Activated naive CD8-positive, alpha-beta T cell treated with anti-CD3 and anti-CD28 coated beads, Interleukin-2, amount 10 ng/mL, durations not matched to agents 7 days and 5 days (primary cell): ENCODE measurements at regions of chr5 and their contacts with region 1.

Region 1: GRCh38 chr5:80255732-80256479 is at the start of gene SERINC5:
- DNase-seq: peak; percentile 90
- ATAC-seq: peak; percentile 73
- H3K4me3 Mint-ChIP-seq: peak within 1 kb of the TSS; percentile 97
- H3K27ac Mint-ChIP-seq: peak within 1 kb of the TSS; percentile 98
- H3K4me1 Mint-ChIP-seq: peaks cover 31% of the 10 kb centered on the region
- H3K27me3 Mint-ChIP-seq: no peaks in the 10 kb centered on the region
- total RNA-seq, gene SERINC5: 70.2 to 78.3 TPM

Region 2: GRCh38 chr5:80117446-80117845 is 138.5 kb before region 1 on chr5:
- POLR2A ChIA-PET with region 1: interaction called, 11 read pairs
- DNase-seq: no peak
- ATAC-seq: peak; percentile 71
- H3K4me3 Mint-ChIP-seq: peak overlapping the region; percentile 56
- H3K27ac Mint-ChIP-seq: peak overlapping the region; percentile 62
- H3K4me1 Mint-ChIP-seq: peaks cover 15% of the 10 kb centered on the region
- H3K27me3 Mint-ChIP-seq: no peaks in the 10 kb centered on the region

Region 3: GRCh38 chr5:80134879-80135278 is 121.0 kb before region 1 on chr5:
- POLR2A ChIA-PET with region 1: interaction called, 23 read pairs
- DNase-seq: no peak
- ATAC-seq: no peak
- H3K4me3 Mint-ChIP-seq: peak overlapping the region; percentile 4
- H3K27ac Mint-ChIP-seq: peak overlapping the region; percentile 91
- H3K4me1 Mint-ChIP-seq: peaks cover 44% of the 10 kb centered on the region
- H3K27me3 Mint-ChIP-seq: no peaks in the 10 kb centered on the region

Region 4: GRCh38 chr5:80174790-80175189 is 81.1 kb before region 1 on chr5:
- POLR2A ChIA-PET with region 1: interaction called, 10 read pairs
- DNase-seq: no peak
- ATAC-seq: no peak
- H3K4me3 Mint-ChIP-seq: no peak overlapping the region
- H3K27ac Mint-ChIP-seq: no peak overlapping the region
- H3K4me1 Mint-ChIP-seq: peaks cover 23% of the 10 kb centered on the region
- H3K27me3 Mint-ChIP-seq: no peaks in the 10 kb centered on the region

Region 5: GRCh38 chr5:80191991-80192398 is 63.9 kb before region 1 on chr5:
- POLR2A ChIA-PET with region 1: interaction called, 80 read pairs
- DNase-seq: peak; percentile 64
- ATAC-seq: peak; percentile 81
- H3K4me3 Mint-ChIP-seq: peak overlapping the region; percentile 73
- H3K27ac Mint-ChIP-seq: peak overlapping the region; percentile 93
- H3K4me1 Mint-ChIP-seq: peaks cover 76% of the 10 kb centered on the region
- H3K27me3 Mint-ChIP-seq: no peaks in the 10 kb centered on the region

Region 6: DNA sequence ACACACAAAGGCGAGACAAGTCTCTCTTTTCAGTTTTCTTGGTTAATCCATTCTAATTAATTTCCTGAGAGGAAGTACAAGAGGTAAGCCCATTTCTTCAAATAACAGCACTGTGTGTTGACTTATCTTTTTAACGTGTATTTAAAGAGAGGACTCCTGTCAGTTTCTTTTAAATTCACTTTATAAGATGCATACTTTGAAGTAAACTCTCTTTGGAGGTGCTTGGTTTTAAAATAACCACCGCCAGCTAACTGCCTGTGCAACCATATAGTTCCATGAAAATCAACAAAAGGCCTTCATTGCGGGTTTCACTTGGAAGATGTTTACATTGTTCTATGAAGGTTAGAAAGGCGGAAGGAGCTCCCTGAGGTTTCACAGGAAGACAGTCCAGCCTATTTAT is 13.0 kb after region 1 on chr5:
- POLR2A ChIA-PET with region 1: interaction called, 95 read pairs
- DNase-seq: no peak
- ATAC-seq: peak; percentile 20
- H3K4me3 Mint-ChIP-seq: peak overlapping the region; percentile 74
- H3K27ac Mint-ChIP-seq: peak overlapping the region; percentile 99
- H3K4me1 Mint-ChIP-seq: peaks cover 33% of the 10 kb centered on the region
- H3K27me3 Mint-ChIP-seq: no peaks in the 10 kb centered on the region

Region 7: DNA sequence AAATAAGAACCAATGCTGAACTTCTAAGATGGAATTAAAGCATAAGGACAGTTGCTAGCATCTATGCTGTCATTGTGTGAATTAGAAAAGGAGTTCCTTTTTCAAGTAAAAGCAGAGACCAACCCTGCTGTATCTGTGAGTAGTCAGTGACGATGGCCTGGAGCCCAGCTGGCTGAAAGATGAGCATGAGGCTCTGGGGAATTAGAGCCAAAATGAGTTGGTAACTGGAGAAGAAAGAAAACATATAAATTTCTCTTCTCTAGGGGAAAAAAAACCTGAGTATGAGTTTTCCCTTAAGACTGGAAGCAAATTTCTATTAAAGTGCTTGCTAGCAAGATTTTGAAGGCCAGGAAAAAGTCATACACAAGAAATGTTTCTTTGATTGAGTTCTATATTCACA is 62.3 kb after region 1 on chr5:
- POLR2A ChIA-PET with region 1: no interaction called
- DNase-seq: no peak
- ATAC-seq: no peak
- H3K4me3 Mint-ChIP-seq: no peak overlapping the region
- H3K27ac Mint-ChIP-seq: no peak overlapping the region
- H3K4me1 Mint-ChIP-seq: peaks cover 1% of the 10 kb centered on the region
- H3K27me3 Mint-ChIP-seq: peaks cover 38% of the 10 kb centered on the region

Region 8: DNA sequence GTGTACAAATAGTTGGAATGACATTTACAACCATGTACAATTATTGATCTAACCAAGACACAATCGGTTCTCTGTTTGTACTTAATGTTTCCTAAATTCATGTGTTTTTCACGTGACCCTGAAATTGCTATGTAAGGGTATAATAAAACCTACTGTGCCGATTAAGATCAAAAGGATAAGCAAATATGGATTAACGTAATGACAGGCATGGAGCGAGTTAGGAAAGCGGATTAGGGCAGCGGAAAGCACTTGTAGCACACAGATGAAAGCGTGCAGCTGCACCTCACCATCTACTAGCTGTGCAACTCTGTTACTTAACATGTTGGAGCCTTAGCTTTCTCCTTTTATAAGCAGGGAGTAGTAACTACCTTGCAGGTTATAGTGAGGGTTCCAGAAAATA is 113.6 kb after region 1 on chr5:
- POLR2A ChIA-PET with region 1: no interaction called
- DNase-seq: no peak
- ATAC-seq: no peak
- H3K4me3 Mint-ChIP-seq: no peak overlapping the region
- H3K27ac Mint-ChIP-seq: no peak overlapping the region
- H3K4me1 Mint-ChIP-seq: no peaks in the 10 kb centered on the region
- H3K27me3 Mint-ChIP-seq: peaks cover 23% of the 10 kb centered on the region

Region 9: GRCh38 chr5:80399526-80400239 is 143.8 kb after region 1 on chr5:
- POLR2A ChIA-PET with region 1: no interaction called
- DNase-seq: no peak
- ATAC-seq: no peak
- H3K4me3 Mint-ChIP-seq: no peak overlapping the region
- H3K27ac Mint-ChIP-seq: no peak overlapping the region
- H3K4me1 Mint-ChIP-seq: peaks cover 7% of the 10 kb centered on the region
- H3K27me3 Mint-ChIP-seq: peaks cover 7% of the 10 kb centered on the region